CD4-positive, alpha-beta T cell (primary cell): ENCODE measurements at regions of chr6 and their contacts with region 1.

Region 1: DNA sequence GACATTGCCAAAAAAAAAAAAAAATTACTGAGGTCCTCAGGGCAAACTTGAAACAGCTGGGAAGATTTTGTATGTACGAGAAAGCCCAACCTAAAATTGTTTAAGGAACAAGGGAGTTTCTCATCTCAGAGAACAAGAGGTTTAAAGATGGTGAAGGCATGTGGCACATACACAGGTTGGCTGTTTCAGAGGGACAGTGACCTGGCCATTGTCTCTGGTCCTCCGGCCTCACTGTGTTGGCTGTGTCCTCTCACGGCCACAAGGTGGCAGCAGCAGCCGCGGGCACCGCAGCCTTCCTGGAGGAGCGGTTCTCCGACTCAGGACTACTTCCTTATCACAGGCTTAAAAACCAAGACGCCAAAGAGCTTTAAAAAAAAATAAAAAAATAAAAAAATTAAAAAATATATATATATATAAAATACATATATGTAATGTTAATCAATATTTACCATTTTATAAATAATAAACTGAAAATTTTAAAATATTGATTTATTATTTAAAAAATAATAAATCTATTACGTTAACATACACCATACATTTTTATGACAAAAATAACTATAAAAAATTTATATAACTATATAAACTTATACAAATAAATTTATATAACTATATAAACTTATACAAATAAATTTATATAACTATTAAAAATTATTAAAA is 52.8 kb downstream of the GTF2H5 start:
- DNase-seq: peak; percentile 44 to 87 (median 66)
- ATAC-seq: peak; percentile 74
- H3K4me3 ChIP-seq: no peak overlapping the region
- H3K4me3 Mint-ChIP-seq: no peak overlapping the region
- H3K27ac ChIP-seq: no peak overlapping the region
- H3K27ac Mint-ChIP-seq: no peak overlapping the region
- H3K4me1 ChIP-seq: peaks cover 2% of the 10 kb centered on the region
- H3K4me1 Mint-ChIP-seq: peaks cover 3% of the 10 kb centered on the region
- H3K27me3 ChIP-seq: no peaks in the 10 kb centered on the region
- H3K27me3 Mint-ChIP-seq: no peaks in the 10 kb centered on the region
- CTCF ChIP-seq: peak; percentile 92

Region 2: GRCh38 chr6:158387036-158387435 is 166.1 kb after region 1 on chr6:
- CTCF ChIA-PET with region 1: interaction called, 11 read pairs
- POLR2A ChIA-PET with region 1: no interaction called
- intact Hi-C with region 1: loop called (anchors 2 kb)
- DNase-seq: peak in 3 of 14 experiments; percentile 36 to 47 (median 45)
- ATAC-seq: no peak
- H3K4me3 ChIP-seq: no peak overlapping the region
- H3K4me3 Mint-ChIP-seq: no peak overlapping the region
- H3K27ac ChIP-seq: no peak overlapping the region
- H3K27ac Mint-ChIP-seq: no peak overlapping the region
- H3K4me1 ChIP-seq: no peaks in the 10 kb centered on the region
- H3K4me1 Mint-ChIP-seq: peaks cover 27% of the 10 kb centered on the region
- H3K27me3 ChIP-seq: no peaks in the 10 kb centered on the region
- H3K27me3 Mint-ChIP-seq: no peaks in the 10 kb centered on the region
- CTCF ChIP-seq: peak; percentile 30

Region 3: GRCh38 chr6:158518191-158519127 is 297.5 kb after region 1 on chr6:
- CTCF ChIA-PET with region 1: interaction called, 7 read pairs
- POLR2A ChIA-PET with region 1: no interaction called
- intact Hi-C with region 1: loop called (anchors 2 to 5 kb)
- DNase-seq: peak; percentile 17 to 78 (median 40)
- ATAC-seq: peak; percentile 85
- H3K4me3 ChIP-seq: peak overlapping the region; percentile 51
- H3K4me3 Mint-ChIP-seq: peak overlapping the region; percentile 73
- H3K27ac ChIP-seq: peak overlapping the region in 1 of 2 donors; percentile 41
- H3K27ac Mint-ChIP-seq: no peak overlapping the region
- H3K4me1 ChIP-seq: peaks cover 42% of the 10 kb centered on the region
- H3K4me1 Mint-ChIP-seq: peaks cover 39% of the 10 kb centered on the region
- H3K27me3 ChIP-seq: peaks cover 2 to 7% of the 10 kb centered on the region in 2 experiments
- H3K27me3 Mint-ChIP-seq: peaks cover 40% of the 10 kb centered on the region
- CTCF ChIP-seq: peak; percentile 34

Region 4: DNA sequence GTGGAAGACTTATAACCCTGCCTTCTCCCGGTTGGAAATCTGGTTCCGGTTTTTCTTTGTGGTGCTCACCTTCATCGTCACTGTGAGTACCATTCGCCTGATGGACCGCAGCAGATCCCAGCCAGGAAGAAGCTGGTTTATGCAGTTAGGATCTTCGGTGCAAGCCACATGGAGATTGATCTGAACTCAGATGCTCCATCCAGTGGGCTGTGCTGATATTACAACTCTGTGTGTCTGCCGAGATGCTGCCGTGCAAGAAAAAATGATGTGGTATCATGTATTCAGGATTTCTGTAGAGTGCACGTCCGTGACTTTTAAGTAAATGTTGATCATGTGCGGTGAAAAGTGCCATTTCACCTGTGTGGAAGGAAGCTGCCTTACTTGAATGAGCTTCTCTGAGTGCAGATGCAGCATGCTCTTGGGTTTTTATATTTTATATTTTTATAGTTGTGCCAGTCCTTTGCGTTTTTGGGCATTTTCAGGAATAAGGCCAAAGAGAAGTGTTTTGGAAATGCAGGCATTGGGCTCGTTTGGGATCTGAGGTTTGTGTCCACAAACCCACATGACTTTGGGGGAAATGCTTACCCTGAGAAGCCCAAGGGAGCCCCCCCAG is 384.5 kb after region 1 on chr6:
- CTCF ChIA-PET with region 1: interaction called, 6 read pairs
- POLR2A ChIA-PET with region 1: no interaction called
- intact Hi-C with region 1: loop called in 1 of 2 experiments (anchors 2 kb)
- DNase-seq: peak; percentile 30 to 75 (median 52)
- ATAC-seq: peak; percentile 85
- H3K4me3 ChIP-seq: no peak overlapping the region
- H3K4me3 Mint-ChIP-seq: no peak overlapping the region
- H3K27ac ChIP-seq: no peak overlapping the region
- H3K27ac Mint-ChIP-seq: peak overlapping the region; percentile 39
- H3K4me1 ChIP-seq: no peaks in the 10 kb centered on the region
- H3K4me1 Mint-ChIP-seq: peaks cover 5% of the 10 kb centered on the region
- H3K27me3 ChIP-seq: no peaks in the 10 kb centered on the region
- H3K27me3 Mint-ChIP-seq: no peaks in the 10 kb centered on the region
- CTCF ChIP-seq: peak; percentile 70

Region 5: GRCh38 chr6:159134701-159135364 is 913.9 kb after region 1 on chr6:
- CTCF ChIA-PET with region 1: interaction called, 3 read pairs
- POLR2A ChIA-PET with region 1: no interaction called
- intact Hi-C with region 1: loop called in 1 of 2 experiments (anchors 2 kb)
- DNase-seq: peak; percentile 56 to 88 (median 72)
- ATAC-seq: peak; percentile 99
- H3K4me3 ChIP-seq: no peak overlapping the region
- H3K4me3 Mint-ChIP-seq: no peak overlapping the region
- H3K27ac ChIP-seq: no peak overlapping the region
- H3K27ac Mint-ChIP-seq: no peak overlapping the region
- H3K4me1 ChIP-seq: peaks cover 5% of the 10 kb centered on the region
- H3K4me1 Mint-ChIP-seq: peaks cover 6% of the 10 kb centered on the region
- H3K27me3 ChIP-seq: no peaks in the 10 kb centered on the region
- H3K27me3 Mint-ChIP-seq: peaks cover 8% of the 10 kb centered on the region
- CTCF ChIP-seq: peak; percentile 98